Heart right ventricle (tissue), 16 donors: ENCODE measurements at regions of chr17 and their contacts with region 1.

Region 1: GRCh38 chr17:43517615-43518386 is 28.3 kb downstream of the ETV4 start:
- DNase-seq: no peak
- ATAC-seq: peak in 7 of 8 donors; percentile 48 to 77 (median 52)
- H3K4me3 ChIP-seq: no peak overlapping the region
- H3K27ac ChIP-seq: peak overlapping the region in 8 of 10 donors; percentile 47 to 74 (median 54)
- H3K4me1 ChIP-seq: peaks cover 3 to 37% (median 28%) of the 10 kb centered on the region in 9 donors
- H3K27me3 ChIP-seq: no peaks in the 10 kb centered on the region
- CTCF ChIP-seq: no peak

Region 2: GRCh38 chr17:43552229-43552837 is 34.5 kb after region 1 on chr17:
- intact Hi-C with region 1: loop called in 1 of 10 experiments (anchors 5 kb)
- DNase-seq: no peak
- ATAC-seq: peak; percentile 75 to 93 (median 82)
- H3K4me3 ChIP-seq: no peak overlapping the region
- H3K27ac ChIP-seq: peak overlapping the region in 8 of 10 donors; percentile 44 to 74 (median 60)
- H3K4me1 ChIP-seq: peaks cover 0 to 14% (median 3%) of the 10 kb centered on the region in 9 donors
- H3K27me3 ChIP-seq: peaks cover 0 to 45% (median 6%) of the 10 kb centered on the region in 7 donors
- CTCF ChIP-seq: peak in 2 of 9 donors; percentile 7 to 14